BJ (cell line): ENCODE measurements at regions of chr9 and their contacts with region 1.

Region 1: GRCh38 chr9:122991370-122991830 is 42.1 kb upstream of the GPR21 start:
- DNase-seq: peak; percentile 83
- H3K4me3 ChIP-seq: no peak overlapping the region
- H3K27me3 ChIP-seq: no peaks in the 10 kb centered on the region
- CTCF ChIP-seq: peak; percentile 67

Region 2: DNA sequence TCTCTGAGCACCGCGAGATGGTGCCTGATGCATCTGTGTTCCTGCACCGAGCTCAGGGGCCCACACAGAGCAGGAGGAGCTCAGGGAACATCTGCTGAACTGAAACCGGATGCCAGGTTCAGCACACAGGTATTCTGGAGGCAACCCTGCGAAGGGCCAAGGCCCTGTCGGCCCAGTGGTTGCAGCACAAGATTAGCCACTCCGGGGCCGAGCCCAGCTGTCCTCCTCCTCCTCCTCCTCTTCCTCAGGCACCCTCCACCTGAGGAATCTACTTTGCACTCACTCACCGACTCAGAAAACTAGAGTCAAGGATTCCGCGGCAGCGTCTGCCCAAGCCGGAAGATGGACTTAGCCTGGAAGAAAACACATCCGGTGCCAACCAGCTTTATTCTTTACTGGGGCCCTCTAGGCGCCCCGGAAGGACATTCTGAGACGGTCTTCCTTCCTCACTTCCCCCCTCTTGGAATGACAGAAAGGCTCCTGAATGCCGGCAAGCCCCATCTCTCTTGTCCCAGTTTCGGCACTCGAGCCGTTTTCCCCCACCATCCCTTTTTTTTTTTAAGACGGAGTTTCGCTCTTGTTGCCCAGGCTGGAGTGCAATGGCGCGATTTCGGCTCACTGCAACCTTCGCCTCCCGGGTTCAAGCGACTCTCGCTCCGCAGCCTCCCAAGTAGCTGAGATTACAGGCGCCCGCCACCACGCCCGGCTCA is 78.3 kb before region 1 on chr9 and contains the start of gene ZBTB6:
- CTCF ChIA-PET with region 1: no interaction called
- POLR2A ChIA-PET with region 1: interaction called, 10 read pairs
- DNase-seq: peak; percentile 49
- H3K4me3 ChIP-seq: peak within 1 kb of the TSS; percentile 97
- H3K27me3 ChIP-seq: no peaks in the 10 kb centered on the region
- CTCF ChIP-seq: no peak
- polyA plus RNA-seq, gene ZBTB6: 2.5 and 5.0 TPM in 2 replicates